CD8-positive, alpha-beta memory T cell (primary cell): ENCODE measurements at regions of chr17 and their contacts with region 1.

Region 1: GRCh38 chr17:19744922-19745757 is 3.0 kb downstream of the ALDH3A1 start:
- DNase-seq: peak; percentile 70 to 84 (median 71)
- H3K4me3 ChIP-seq: no peak overlapping the region
- H3K4me3 Mint-ChIP-seq: peak overlapping the region; percentile 20 to 74 (median 61)
- H3K27ac ChIP-seq: no peak overlapping the region
- H3K27ac Mint-ChIP-seq: peak overlapping the region in 1 of 8 donors; percentile 54
- H3K4me1 ChIP-seq: peaks cover 4% of the 10 kb centered on the region
- H3K4me1 Mint-ChIP-seq: peaks cover 0 to 10% (median 0%) of the 10 kb centered on the region in 3 donors
- H3K27me3 ChIP-seq: no peaks in the 10 kb centered on the region
- H3K27me3 Mint-ChIP-seq: peaks cover 4 to 12% of the 10 kb centered on the region in 2 donors

Region 2: GRCh38 chr17:19648475-19649406 is 96.4 kb before region 1 on chr17 and contains the start of gene ALDH3A2:
- CTCF ChIA-PET with region 1: interaction called, 10 read pairs
- POLR2A ChIA-PET with region 1: interaction called, 3 read pairs
- DNase-seq: peak; percentile 89 to 95 (median 91)
- H3K4me3 ChIP-seq: peak within 1 kb of the TSS; percentile 76
- H3K4me3 Mint-ChIP-seq: peak within 1 kb of the TSS; percentile 95 to 98 (median 96)
- H3K27ac ChIP-seq: peak within 1 kb of the TSS; percentile 41
- H3K27ac Mint-ChIP-seq: peak within 1 kb of the TSS; percentile 93 to 99 (median 95)
- H3K4me1 ChIP-seq: peaks cover 20% of the 10 kb centered on the region
- H3K4me1 Mint-ChIP-seq: peaks cover 25 to 53% (median 41%) of the 10 kb centered on the region in 3 donors
- H3K27me3 ChIP-seq: no peaks in the 10 kb centered on the region
- H3K27me3 Mint-ChIP-seq: no peaks in the 10 kb centered on the region
- total RNA-seq, gene ALDH3A2: 24.7 to 26.3 TPM

Region 3: GRCh38 chr17:19702217-19702641 is 42.9 kb before region 1 on chr17:
- CTCF ChIA-PET with region 1: no interaction called
- POLR2A ChIA-PET with region 1: no interaction called
- DNase-seq: no peak
- H3K4me3 ChIP-seq: no peak overlapping the region
- H3K4me3 Mint-ChIP-seq: no peak overlapping the region
- H3K27ac ChIP-seq: no peak overlapping the region
- H3K27ac Mint-ChIP-seq: peak overlapping the region in 1 of 8 donors; percentile 6
- H3K4me1 ChIP-seq: no peaks in the 10 kb centered on the region
- H3K4me1 Mint-ChIP-seq: no peaks in the 10 kb centered on the region
- H3K27me3 ChIP-seq: no peaks in the 10 kb centered on the region
- H3K27me3 Mint-ChIP-seq: peaks cover 0 to 2% of the 10 kb centered on the region in 2 donors

Region 4: GRCh38 chr17:19728079-19728495 is 17.1 kb before region 1 on chr17:
- CTCF ChIA-PET with region 1: interaction called, 19 read pairs
- POLR2A ChIA-PET with region 1: no interaction called
- DNase-seq: no peak
- H3K4me3 ChIP-seq: no peak overlapping the region
- H3K4me3 Mint-ChIP-seq: no peak overlapping the region
- H3K27ac ChIP-seq: no peak overlapping the region
- H3K27ac Mint-ChIP-seq: no peak overlapping the region
- H3K4me1 ChIP-seq: peaks cover 17% of the 10 kb centered on the region
- H3K4me1 Mint-ChIP-seq: peaks cover 16 to 19% (median 19%) of the 10 kb centered on the region in 3 donors
- H3K27me3 ChIP-seq: no peaks in the 10 kb centered on the region
- H3K27me3 Mint-ChIP-seq: no peaks in the 10 kb centered on the region